PC-9 (cell line): ENCODE measurements at regions of chr3 and their contacts with region 1.

Region 1: GRCh38 chr3:14508961-14509795 is 31.0 kb downstream of the GRIP2 start:
- DNase-seq: peak; percentile 44 to 68
- H3K4me3 ChIP-seq: no peak overlapping the region
- H3K27ac ChIP-seq: no peak overlapping the region
- H3K4me1 ChIP-seq: 0 out of 2 replicates have a peak, but pooled peaks cover 5% of the 10 kb centered on the region
- H3K27me3 ChIP-seq: 0 out of 2 replicates have a peak, but pooled peaks cover 5% of the 10 kb centered on the region
- CTCF ChIP-seq: peak; percentile 96

Region 2: GRCh38 chr3:14780927-14781507 is 271.8 kb after region 1 on chr3:
- CTCF ChIA-PET with region 1: no interaction called
- POLR2A ChIA-PET with region 1: no interaction called
- intact Hi-C with region 1: loop called (anchors 1 kb)
- DNase-seq: peak; percentile 38 to 43
- H3K4me3 ChIP-seq: no peak overlapping the region
- H3K27ac ChIP-seq: no peak overlapping the region
- H3K4me1 ChIP-seq: no peaks in the 10 kb centered on the region
- H3K27me3 ChIP-seq: peaks cover 4% of the 10 kb centered on the region; the same call in 1 of the 2 replicates
- CTCF ChIP-seq: peak; percentile 83

Region 3: DNA sequence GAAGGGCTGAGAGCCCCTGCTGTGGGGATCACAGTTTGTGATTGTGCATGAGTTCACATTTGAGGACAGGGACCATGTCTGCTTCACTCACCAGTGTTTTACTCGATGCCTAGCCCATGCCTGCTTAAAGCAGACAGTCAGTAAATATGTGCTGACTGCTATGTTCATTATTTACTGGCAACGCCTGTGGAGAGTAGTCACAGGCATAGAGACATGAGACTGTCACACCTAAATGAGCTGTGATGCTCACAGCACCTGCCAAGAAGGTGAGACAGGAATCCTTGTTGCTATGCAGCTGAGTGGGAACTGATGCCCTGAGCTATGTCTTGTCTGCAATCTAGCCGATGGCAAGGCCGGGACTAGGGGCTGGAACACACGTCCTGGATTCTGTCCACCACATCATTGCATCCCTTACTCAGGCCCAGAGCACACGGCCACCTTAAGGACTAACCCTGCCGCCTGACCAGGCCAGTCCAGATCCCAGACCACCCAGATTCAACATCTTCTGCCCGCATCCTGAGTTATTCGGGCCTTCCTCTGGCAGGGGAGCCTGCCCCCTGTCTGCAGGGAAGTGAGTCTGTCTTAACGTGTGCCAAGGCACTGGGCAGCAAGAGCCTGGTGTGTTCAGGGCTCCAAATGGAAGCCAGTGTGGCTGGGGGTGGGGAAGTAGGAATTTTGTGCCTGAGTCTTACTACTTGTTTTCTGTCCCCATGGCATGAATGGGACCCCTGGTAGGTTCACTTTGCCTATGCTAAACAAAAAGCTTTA is 354.3 kb after region 1 on chr3:
- CTCF ChIA-PET with region 1: interaction called, 21 read pairs
- POLR2A ChIA-PET with region 1: no interaction called
- intact Hi-C with region 1: no loop called
- DNase-seq: no peak
- H3K4me3 ChIP-seq: no peak overlapping the region
- H3K27ac ChIP-seq: no peak overlapping the region
- H3K4me1 ChIP-seq: no peaks in the 10 kb centered on the region
- H3K27me3 ChIP-seq: no peaks in the 10 kb centered on the region
- CTCF ChIP-seq: no peak; the same call in 1 of the 2 replicates